ENCODE measurements at regions of chr11 and their contacts with region 1.

Region 1: DNA sequence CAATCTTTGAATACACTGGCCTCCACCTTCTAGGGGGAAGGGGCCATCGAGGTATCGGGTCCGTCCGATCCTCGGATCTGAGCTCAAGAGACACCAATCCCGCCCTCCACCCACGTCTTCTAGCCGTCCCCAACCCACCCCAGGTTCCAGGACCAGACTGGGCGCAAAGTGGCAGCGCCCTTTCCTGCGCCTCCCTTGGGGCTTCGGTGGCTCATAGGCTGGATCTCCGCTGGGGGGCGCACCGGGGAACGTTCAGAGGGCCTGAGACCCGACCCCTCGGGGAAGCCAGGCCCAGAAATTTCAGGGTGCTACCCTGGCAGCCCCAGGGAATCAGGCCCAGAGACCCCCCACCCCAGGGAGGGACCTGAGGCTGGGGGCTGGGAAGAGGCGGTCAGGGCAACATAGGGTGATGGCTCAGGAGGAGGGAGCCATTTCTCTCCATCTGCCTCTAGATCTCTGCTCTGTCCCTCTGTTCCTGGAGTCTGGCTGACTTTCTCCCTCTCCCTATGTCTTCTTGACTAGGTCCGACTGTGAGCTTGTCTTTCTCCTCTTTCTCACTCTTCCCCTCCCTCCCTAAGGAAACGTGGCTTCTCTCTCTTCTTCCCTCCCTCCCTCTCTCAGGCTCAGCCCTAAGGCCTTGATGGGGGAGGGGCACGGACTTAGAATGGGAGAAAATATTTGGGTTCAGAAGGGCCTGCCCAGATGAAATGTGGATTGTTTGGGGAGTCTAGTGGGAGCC is 1.1 kb downstream of the CREB3L1 start:
- DNase-seq: peak; percentile 72
- H3K4me3 ChIP-seq: peak overlapping the region; percentile 62
- H3K27ac ChIP-seq: peak overlapping the region; percentile 3
- H3K4me1 ChIP-seq: peaks cover 46% of the 10 kb centered on the region
- H3K27me3 ChIP-seq: no peaks in the 10 kb centered on the region
- CTCF ChIP-seq: peak; percentile 99

Region 2: GRCh38 chr11:46183819-46184218 is 94.7 kb before region 1 on chr11:
- CTCF ChIA-PET with region 1: no interaction called
- POLR2A ChIA-PET with region 1: no interaction called
- intact Hi-C with region 1: no loop called
- DNase-seq: no peak
- H3K4me3 ChIP-seq: no peak overlapping the region
- H3K27ac ChIP-seq: no peak overlapping the region
- H3K4me1 ChIP-seq: no peaks in the 10 kb centered on the region
- H3K27me3 ChIP-seq: peaks cover 24% of the 10 kb centered on the region
- CTCF ChIP-seq: no peak

Region 3: DNA sequence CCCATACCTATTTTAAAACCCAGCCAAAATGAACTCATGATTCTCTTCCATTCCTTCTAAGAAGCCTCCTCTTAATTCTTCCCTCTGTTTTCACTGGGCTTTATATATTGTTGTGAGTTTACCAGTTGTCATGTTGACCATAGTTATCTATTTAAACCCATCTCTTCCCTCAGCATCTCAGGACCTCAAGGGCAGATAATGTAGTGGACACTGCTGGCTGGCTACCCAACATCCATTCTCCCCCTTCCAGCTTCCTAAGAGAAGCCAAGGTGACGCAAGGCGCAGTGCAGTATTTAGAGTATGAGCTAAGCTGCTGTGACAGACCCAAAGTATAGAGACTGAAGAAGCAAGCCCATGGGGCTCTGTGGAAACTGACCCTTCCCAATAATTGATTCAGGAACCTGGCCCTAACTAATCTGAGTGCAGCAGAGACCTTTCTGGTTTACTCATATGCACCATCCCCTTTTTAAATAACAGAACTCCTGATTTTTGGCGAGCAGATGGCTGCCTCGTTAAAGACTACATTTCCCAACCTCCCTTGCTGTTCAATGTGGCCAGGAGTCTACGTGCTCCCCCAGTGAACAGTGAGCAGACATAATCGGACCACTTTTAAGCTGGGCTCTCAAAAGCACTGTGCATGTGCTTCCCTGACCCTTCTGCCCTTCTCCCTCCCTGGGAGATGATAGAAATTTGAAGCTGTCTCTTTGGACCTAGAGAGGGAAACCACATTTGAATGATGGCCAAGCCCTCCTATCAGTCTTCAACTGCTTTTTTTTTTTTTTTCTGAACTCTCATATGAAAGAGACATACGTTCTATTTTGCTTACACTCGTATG is 29.2 kb before region 1 on chr11:
- CTCF ChIA-PET with region 1: no interaction called
- POLR2A ChIA-PET with region 1: no interaction called
- intact Hi-C with region 1: no loop called
- DNase-seq: peak; percentile 57
- H3K4me3 ChIP-seq: no peak overlapping the region
- H3K27ac ChIP-seq: peak overlapping the region; percentile 42
- H3K4me1 ChIP-seq: peaks cover 9% of the 10 kb centered on the region
- H3K27me3 ChIP-seq: no peaks in the 10 kb centered on the region
- CTCF ChIP-seq: no peak

Region 4: DNA sequence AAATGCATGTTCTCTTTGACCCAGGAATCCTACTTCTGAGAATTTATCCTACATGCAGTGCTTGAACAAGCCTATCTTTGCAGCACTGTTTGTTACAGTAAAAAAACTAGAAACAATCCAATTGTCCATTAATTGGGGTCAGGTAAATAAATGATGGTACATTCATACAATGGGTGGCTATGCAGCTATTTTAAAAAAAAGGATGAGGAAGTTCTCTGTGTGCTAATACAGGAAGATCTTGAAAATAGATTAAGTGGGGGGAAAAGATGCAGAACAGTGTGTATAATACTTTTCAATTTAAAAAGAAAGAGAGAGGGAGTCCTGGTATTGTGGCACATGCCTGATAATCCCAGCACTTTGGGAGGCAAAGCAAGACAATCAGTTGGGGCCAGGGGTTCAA is 10.6 kb before region 1 on chr11:
- CTCF ChIA-PET with region 1: interaction called, 3 read pairs
- POLR2A ChIA-PET with region 1: interaction called, 13 read pairs
- intact Hi-C with region 1: no loop called
- DNase-seq: no peak
- H3K4me3 ChIP-seq: no peak overlapping the region
- H3K27ac ChIP-seq: no peak overlapping the region
- H3K4me1 ChIP-seq: peaks cover 12% of the 10 kb centered on the region
- H3K27me3 ChIP-seq: no peaks in the 10 kb centered on the region
- CTCF ChIP-seq: no peak

Region 5: GRCh38 chr11:46332568-46333393 is 54.2 kb after region 1 on chr11:
- CTCF ChIA-PET with region 1: no interaction called
- POLR2A ChIA-PET with region 1: no interaction called
- intact Hi-C with region 1: loop called (anchors 5 kb)
- DNase-seq: peak; percentile 68
- H3K4me3 ChIP-seq: peak overlapping the region; percentile 54
- H3K27ac ChIP-seq: no peak overlapping the region
- H3K4me1 ChIP-seq: peaks cover 38% of the 10 kb centered on the region
- H3K27me3 ChIP-seq: peaks cover 14% of the 10 kb centered on the region
- CTCF ChIP-seq: no peak

Measured in A673 (cell line).